ENCODE measurements at regions of chr7 and their contacts with region 1.

Region 1: GRCh38 chr7:101321491-101322401 is at the start of gene IFT22:
- DNase-seq: peak; percentile 84
- ATAC-seq: peak; percentile 95
- H3K4me3 ChIP-seq: peak within 1 kb of the TSS; percentile 68 to 84 (median 83)
- H3K27ac ChIP-seq: peak within 1 kb of the TSS; percentile 72
- H3K4me1 ChIP-seq: peaks cover 29% of the 10 kb centered on the region
- H3K27me3 ChIP-seq: no peaks in the 10 kb centered on the region
- CTCF ChIP-seq: peak; percentile 73
- EP300 ChIP-seq: no peak
- POLR2A ChIP-seq: peak; percentile 65 to 81
- RAD21 ChIP-seq: no peak
- total RNA-seq, gene IFT22: 14.5 and 16.5 TPM in 2 replicates

Region 2: DNA sequence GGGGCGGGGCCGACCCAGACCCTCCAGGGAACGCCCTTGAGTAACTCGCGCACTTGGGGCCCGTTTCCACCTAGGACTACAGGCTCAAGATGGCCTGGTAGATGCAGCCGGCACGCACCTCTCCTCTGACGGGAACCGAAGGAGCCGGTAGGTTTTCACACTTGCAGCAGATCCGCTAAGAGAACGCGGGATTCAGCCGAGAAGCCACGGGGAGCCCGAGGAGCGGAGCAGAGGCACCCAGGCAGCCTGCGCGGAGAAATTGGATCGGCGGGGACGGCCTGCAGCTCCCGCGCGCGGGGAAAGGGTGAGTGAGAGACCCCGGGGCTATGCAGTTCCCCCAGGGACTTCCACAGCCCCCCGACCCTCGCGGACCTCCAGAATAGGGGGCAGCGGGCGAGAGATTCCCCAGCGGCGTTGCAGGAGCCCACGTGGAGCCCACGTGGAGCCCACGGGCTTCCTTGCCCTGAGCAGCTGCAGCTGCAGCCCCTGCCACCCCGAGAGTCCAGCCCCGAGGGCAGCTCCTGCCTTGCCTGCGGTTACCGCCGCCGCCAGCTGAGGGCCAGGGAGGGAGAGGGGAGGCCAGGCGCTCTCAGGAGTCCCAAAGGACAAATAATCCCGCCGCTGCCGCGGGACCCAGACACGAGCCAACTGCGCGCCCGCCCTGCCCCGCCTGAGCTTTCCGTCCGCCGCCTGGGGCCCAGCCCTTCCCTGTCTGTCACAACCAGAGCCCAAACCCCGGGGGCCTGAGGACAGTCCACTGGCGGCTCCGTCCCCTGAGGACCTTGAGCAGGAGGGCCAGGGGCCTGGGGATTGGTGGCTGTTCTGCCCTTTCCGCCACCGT is 13.3 kb before region 1 on chr7:
- CTCF ChIA-PET with region 1: no interaction called
- POLR2A ChIA-PET with region 1: interaction called, 53 read pairs
- in situ Hi-C with region 1: no loop called
- intact Hi-C with region 1: no loop called
- DNase-seq: peak; percentile 73
- ATAC-seq: peak; percentile 93
- H3K4me3 ChIP-seq: peak overlapping the region; percentile 82 to 94 (median 89)
- H3K27ac ChIP-seq: peak overlapping the region; percentile 82
- H3K4me1 ChIP-seq: peaks cover 9% of the 10 kb centered on the region; the same call in 1 of the 2 replicates
- H3K27me3 ChIP-seq: no peaks in the 10 kb centered on the region
- CTCF ChIP-seq: no peak; the same call in 1 of the 2 replicates
- EP300 ChIP-seq: no peak
- POLR2A ChIP-seq: peak; percentile 82 to 85
- RAD21 ChIP-seq: no peak

Region 3: GRCh38 chr7:101332026-101332425 is 10.3 kb after region 1 on chr7:
- CTCF ChIA-PET with region 1: no interaction called
- POLR2A ChIA-PET with region 1: interaction called, 3 read pairs
- in situ Hi-C with region 1: no loop called
- intact Hi-C with region 1: loop called (anchors 1 kb)
- DNase-seq: no peak
- ATAC-seq: no peak
- H3K4me3 ChIP-seq: no peak overlapping the region
- H3K27ac ChIP-seq: no peak overlapping the region
- H3K4me1 ChIP-seq: no peaks in the 10 kb centered on the region; the same call in 1 of the 2 replicates
- H3K27me3 ChIP-seq: no peaks in the 10 kb centered on the region; a peak in 1 of 5 replicates
- CTCF ChIP-seq: no peak
- EP300 ChIP-seq: no peak
- POLR2A ChIP-seq: no peak
- RAD21 ChIP-seq: no peak

Region 4: GRCh38 chr7:101390901-101391301 is 69.2 kb after region 1 on chr7:
- CTCF ChIA-PET with region 1: no interaction called
- POLR2A ChIA-PET with region 1: no interaction called
- in situ Hi-C with region 1: no loop called
- intact Hi-C with region 1: loop called (anchors 10 kb)
- DNase-seq: peak; percentile 91
- ATAC-seq: peak; percentile 88
- H3K4me3 ChIP-seq: peak overlapping the region in 1 of 3 experiments; percentile 38; a peak in 2 of 6 replicates
- H3K27ac ChIP-seq: peak overlapping the region; percentile 78
- H3K4me1 ChIP-seq: peaks cover 60% of the 10 kb centered on the region
- H3K27me3 ChIP-seq: no peaks in the 10 kb centered on the region
- CTCF ChIP-seq: peak; percentile 31; the same call in 1 of the 2 replicates
- EP300 ChIP-seq: peak in 1 of 2 experiments; percentile 82; a peak in 2 of 4 replicates
- POLR2A ChIP-seq: no peak
- RAD21 ChIP-seq: no peak

Region 5: DNA sequence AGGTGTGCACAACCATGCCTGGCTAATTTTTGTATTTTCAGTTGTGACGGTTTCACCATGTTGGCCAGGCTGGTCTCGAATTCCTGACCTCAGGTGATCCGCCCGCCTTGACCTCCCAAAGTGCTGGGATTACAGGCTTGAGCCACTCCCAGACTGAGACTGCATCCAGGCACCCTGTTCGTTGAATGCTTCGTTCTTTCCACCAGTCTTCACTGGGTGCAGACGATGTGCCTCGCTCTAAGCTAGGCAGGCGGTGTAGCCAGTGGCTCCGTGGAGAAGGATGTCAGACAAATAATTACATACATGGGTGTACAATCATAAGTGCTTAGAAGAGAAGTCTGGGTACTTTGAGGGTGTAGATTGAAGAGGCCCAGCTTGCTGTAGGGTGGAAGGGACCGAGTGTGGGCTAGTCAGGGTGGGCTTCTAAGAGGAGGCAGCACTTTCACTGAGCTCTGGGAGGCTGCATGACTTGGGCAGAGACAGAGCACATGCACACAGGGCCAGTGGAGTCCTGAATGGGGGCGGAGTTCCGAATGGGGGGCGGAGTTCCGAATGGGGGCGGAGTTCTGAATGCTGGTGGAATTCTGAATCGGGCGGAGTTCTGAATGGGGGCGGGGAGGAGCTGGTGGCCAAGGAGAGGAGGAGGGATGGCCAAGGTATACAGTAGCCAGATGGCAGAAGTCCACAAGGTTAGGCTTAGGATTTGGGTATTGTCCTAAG is 115.3 kb after region 1 on chr7:
- CTCF ChIA-PET with region 1: no interaction called
- POLR2A ChIA-PET with region 1: no interaction called
- in situ Hi-C with region 1: no loop called
- intact Hi-C with region 1: loop called (anchors 1 kb)
- DNase-seq: no peak
- ATAC-seq: peak; percentile 42
- H3K4me3 ChIP-seq: no peak overlapping the region
- H3K27ac ChIP-seq: no peak overlapping the region
- H3K4me1 ChIP-seq: 0 out of 2 replicates have a peak, but pooled peaks cover 6% of the 10 kb centered on the region
- H3K27me3 ChIP-seq: no peaks in the 10 kb centered on the region
- CTCF ChIP-seq: no peak
- EP300 ChIP-seq: no peak
- POLR2A ChIP-seq: no peak
- RAD21 ChIP-seq: no peak